Activated CD8-positive, alpha-beta T cell treated with anti-CD3 and anti-CD28 coated beads for 36 hours (primary cell): ENCODE measurements at regions of chr1 and their contacts with region 1.

Region 1: DNA sequence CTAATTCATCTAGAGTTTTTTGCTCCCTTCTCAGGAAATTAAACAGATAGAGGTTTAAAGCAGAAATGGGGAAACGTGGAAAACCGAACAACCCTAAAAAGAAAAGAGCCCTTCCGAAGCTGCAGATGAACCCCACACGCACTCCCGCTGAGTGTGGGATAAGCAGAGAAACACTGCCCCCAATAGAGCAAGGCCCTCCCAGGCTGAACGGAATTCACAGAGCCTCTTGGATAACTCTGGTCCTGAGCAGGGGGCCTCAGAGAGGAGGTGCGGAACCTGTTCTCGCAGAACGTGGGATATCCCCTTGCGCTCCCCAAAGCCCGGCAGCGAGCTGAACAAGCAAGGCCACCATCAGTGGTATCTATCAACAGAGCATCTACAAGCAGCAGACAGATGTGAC is 44.9 kb downstream of the SSBP3 start:
- DNase-seq: no peak
- ATAC-seq: no peak
- H3K4me3 Mint-ChIP-seq: no peak overlapping the region
- H3K27ac Mint-ChIP-seq: peak overlapping the region; percentile 4
- H3K4me1 Mint-ChIP-seq: peaks cover 75% of the 10 kb centered on the region
- H3K27me3 Mint-ChIP-seq: no peaks in the 10 kb centered on the region
- CTCF ChIP-seq: no peak

Region 2: DNA sequence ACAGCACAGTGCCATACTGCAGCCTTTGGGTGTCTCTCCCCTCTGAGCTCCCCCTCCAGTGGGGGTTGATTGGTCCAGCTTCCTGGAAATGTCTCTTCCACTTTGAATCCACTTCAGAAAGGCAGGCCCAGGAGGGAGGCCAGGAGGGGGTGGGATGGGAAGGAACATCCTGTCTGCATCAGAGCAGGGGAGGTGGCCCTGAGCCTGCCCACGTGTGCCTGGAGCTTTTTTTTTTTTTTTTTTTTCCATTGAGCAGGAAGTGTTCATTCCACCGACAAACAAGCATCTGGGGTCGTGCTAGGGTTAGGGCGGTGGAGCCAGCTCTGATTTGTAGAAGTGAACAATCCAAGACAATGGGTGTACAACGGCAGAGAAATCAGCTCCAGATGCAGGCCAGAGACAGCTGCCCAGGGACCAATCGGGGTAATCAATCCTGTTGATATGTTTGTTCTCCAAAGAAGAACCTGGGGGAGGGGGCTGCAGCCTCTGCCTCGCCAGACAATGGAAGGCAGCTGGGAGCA is 48.5 kb before region 1 on chr1:
- CTCF ChIA-PET with region 1: no interaction called
- POLR2A ChIA-PET with region 1: no interaction called
- intact Hi-C with region 1: no loop called
- DNase-seq: peak; percentile 31
- ATAC-seq: peak; percentile 49
- H3K4me3 Mint-ChIP-seq: peak overlapping the region; percentile 9
- H3K27ac Mint-ChIP-seq: peak overlapping the region; percentile 73
- H3K4me1 Mint-ChIP-seq: peaks cover 58% of the 10 kb centered on the region
- H3K27me3 Mint-ChIP-seq: no peaks in the 10 kb centered on the region
- CTCF ChIP-seq: no peak

Region 3: DNA sequence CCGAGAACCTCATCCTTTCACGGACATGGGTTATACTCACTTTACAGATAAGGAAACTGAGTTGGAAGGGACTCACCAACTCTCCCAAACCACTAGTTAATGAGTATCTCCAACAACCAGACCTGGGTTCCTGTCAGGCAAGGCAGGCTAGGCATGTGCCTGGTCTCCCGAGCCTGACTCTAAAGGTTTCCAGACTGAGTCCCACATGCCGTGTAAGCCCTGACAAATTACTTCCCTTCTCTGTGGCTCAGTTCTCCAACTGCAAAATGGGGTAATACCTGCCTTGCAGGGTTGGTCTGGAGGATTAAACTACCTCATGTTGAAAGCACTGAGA is 10.6 kb after region 1 on chr1:
- CTCF ChIA-PET with region 1: interaction called, 8 read pairs
- POLR2A ChIA-PET with region 1: interaction called, 10 read pairs
- intact Hi-C with region 1: no loop called
- DNase-seq: no peak
- ATAC-seq: no peak
- H3K4me3 Mint-ChIP-seq: no peak overlapping the region
- H3K27ac Mint-ChIP-seq: no peak overlapping the region
- H3K4me1 Mint-ChIP-seq: peaks cover 72% of the 10 kb centered on the region
- H3K27me3 Mint-ChIP-seq: no peaks in the 10 kb centered on the region
- CTCF ChIP-seq: no peak